ENCODE measurements at regions of chr17 and their contacts with region 1.

Region 1: GRCh38 chr17:27601069-27601975 is 29.7 kb upstream of the LGALS9 start:
- DNase-seq: peak in 9 of 10 donors; percentile 60 to 96 (median 89)

Region 2: GRCh38 chr17:27236717-27237315 is 364.5 kb before region 1 on chr17:
- intact Hi-C with region 1: loop called (anchors 2 kb)
- DNase-seq: peak in 6 of 10 donors; percentile 50 to 89 (median 78)

Region 3: GRCh38 chr17:27455914-27456680 is 145.2 kb before region 1 on chr17 and contains the start of gene KSR1:
- intact Hi-C with region 1: loop called (anchors 1 kb)
- DNase-seq: peak; percentile 62 to 96 (median 79)

Region 4: DNA sequence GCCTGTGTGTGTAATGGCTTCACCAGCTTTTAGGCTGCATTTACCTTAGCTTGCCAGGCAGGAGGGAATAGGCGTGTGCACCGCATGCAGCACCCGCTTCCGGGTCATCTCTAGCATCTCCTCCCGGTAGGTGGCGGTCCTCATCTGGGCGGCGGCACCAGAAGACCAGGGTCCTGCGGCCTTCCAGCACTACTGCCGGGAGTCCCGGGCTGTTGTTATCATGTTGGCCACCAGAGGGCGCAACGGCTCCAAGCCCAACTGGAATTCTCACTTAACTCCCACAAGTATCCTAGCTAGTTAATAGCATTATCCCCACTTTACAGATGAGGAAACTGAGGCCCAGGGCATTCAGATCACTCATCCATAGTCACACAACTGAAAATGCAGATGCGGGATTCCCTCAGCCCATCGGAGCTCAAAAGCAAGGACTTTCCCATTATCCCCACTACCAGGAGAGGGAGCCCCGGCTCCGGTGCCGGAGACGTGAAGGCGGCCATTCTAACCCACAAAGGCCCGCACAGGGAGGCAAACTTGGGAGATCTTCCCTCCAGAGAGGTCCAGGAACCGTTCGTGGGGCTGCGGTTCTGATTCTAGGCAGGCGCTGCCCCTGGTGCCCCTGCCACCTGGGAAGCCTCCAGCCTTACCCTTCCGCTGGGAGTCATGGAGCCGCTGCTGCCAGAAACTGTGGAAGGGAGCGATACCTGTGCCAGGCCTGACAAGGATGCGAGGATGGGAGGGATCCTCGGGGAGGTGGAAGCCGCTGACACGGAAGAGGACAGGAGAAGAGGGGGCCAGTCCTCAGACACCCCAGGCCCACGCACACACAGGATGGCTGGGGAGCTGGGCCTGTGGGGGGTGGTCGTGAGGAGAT is 53.6 kb after region 1 on chr17:
- intact Hi-C with region 1: loop called (anchors 1 kb)
- DNase-seq: peak; percentile 50 to 95 (median 78)

Region 5: DNA sequence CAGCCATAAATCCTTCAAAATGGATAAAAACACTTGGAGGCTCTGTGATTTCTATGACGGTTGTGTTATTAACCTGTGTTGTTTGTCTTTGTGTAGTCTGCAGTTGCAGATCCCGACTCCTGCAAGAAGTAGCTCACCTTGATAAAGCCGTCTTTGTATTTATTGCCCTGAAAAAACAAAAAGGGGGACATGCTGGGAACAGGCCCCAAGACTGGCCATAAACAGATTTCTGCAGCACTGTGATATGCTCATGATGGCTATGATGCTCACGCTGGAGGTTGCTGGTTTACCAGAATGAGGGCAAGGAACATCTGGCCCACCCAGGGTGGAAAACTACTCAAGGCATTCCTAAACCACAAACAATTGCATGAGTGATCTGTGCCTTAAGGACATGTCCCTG is 100.6 kb after region 1 on chr17:
- intact Hi-C with region 1: no loop called
- DNase-seq: no peak

Region 6: GRCh38 chr17:27879987-27880608 is 278.8 kb after region 1 on chr17:
- intact Hi-C with region 1: loop called (anchors 5 kb)
- DNase-seq: peak; percentile 65 to 96 (median 83)

Measured in posterior cingulate gyrus (tissue), 11 donors.